ENCODE measurements at regions of chr1 and their contacts with region 1.

Region 1: DNA sequence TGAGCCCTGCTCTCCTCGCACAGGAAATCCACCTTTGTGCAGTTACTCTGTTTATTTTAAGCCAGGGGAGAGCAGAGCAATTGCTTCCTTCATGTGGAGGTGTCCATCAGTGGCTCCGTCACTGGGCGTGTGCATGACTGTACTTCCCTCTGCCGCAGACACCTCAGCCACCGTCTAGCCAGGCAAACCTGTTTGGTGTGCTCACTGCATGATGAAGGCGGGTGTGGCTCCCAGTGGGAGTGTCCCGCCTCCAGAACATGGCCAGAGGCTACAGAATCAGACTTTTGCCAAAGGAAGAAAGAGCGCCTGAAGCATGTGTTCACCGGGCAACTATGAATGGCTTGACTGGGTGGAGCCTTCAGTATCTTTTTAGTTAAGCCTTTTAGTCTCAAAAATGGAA is 26.1 kb upstream of the LAMC2 start:
- DNase-seq: peak; percentile 97 to 99
- H3K4me3 ChIP-seq: peak overlapping the region; percentile 30; the same call in 1 of the 2 replicates
- H3K27ac ChIP-seq: peak overlapping the region; percentile 91
- H3K4me1 ChIP-seq: peaks cover 64% of the 10 kb centered on the region
- H3K27me3 ChIP-seq: no peaks in the 10 kb centered on the region
- CTCF ChIP-seq: no peak

Region 2: GRCh38 chr1:183048087-183049085 is 111.6 kb before region 1 on chr1:
- CTCF ChIA-PET with region 1: no interaction called
- POLR2A ChIA-PET with region 1: no interaction called
- intact Hi-C with region 1: no loop called
- DNase-seq: no peak
- H3K4me3 ChIP-seq: no peak overlapping the region
- H3K27ac ChIP-seq: no peak overlapping the region
- H3K4me1 ChIP-seq: peaks cover 11% of the 10 kb centered on the region
- H3K27me3 ChIP-seq: no peaks in the 10 kb centered on the region
- CTCF ChIP-seq: no peak

Region 3: GRCh38 chr1:183180634-183181056 is 20.7 kb after region 1 on chr1:
- CTCF ChIA-PET with region 1: no interaction called
- POLR2A ChIA-PET with region 1: interaction called, 10 read pairs
- intact Hi-C with region 1: loop called (anchors 1 kb)
- DNase-seq: peak in 1 of 2 experiments; percentile 47
- H3K4me3 ChIP-seq: no peak overlapping the region
- H3K27ac ChIP-seq: peak overlapping the region; percentile 49
- H3K4me1 ChIP-seq: peaks cover 26% of the 10 kb centered on the region
- H3K27me3 ChIP-seq: no peaks in the 10 kb centered on the region
- CTCF ChIP-seq: no peak

Region 4: DNA sequence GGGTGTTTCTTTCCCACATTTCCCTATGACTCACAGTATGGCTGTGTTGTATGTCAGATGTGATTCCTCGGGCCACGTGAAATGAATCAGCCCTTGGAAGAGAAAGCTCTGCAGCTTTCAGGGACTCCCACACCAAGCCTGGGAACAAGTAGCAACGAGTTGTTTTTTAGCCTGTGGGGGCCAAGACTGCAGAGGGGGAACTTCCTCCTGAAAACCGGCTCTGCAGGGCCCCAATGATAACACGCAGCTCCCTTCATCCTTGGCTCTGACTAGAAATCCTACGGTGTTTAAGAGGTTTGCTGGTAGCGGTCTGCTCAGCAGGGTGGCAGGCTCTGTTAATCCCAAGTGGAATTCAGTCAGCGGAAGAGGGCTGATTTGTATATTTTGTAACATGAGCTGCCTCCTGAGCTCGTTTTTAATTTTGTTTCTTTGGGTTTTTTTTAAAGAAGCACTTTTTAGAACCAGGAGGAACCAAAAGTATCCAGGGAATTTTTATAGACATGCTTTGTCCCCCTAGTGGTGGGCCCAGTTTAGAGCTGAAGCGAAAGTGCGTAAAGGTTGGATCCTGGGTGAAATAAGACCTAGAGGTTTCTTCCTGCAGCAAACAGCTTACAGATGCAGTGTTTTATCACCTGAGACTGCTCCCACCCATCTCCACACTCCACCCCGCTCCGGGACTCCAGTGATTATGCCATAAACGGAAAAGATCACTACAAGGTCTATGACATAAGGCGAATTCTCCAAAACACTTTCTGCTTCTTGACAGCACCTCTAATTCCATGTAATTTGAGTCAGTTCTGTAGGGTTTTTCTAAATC is 74.9 kb after region 1 on chr1:
- CTCF ChIA-PET with region 1: no interaction called
- POLR2A ChIA-PET with region 1: no interaction called
- intact Hi-C with region 1: loop called (anchors 2 kb)
- DNase-seq: peak; percentile 81 to 96
- H3K4me3 ChIP-seq: peak overlapping the region; percentile 45; the same call in 1 of the 2 replicates
- H3K27ac ChIP-seq: peak overlapping the region; percentile 92
- H3K4me1 ChIP-seq: peaks cover 41% of the 10 kb centered on the region
- H3K27me3 ChIP-seq: no peaks in the 10 kb centered on the region
- CTCF ChIP-seq: peak; percentile 77

Region 5: DNA sequence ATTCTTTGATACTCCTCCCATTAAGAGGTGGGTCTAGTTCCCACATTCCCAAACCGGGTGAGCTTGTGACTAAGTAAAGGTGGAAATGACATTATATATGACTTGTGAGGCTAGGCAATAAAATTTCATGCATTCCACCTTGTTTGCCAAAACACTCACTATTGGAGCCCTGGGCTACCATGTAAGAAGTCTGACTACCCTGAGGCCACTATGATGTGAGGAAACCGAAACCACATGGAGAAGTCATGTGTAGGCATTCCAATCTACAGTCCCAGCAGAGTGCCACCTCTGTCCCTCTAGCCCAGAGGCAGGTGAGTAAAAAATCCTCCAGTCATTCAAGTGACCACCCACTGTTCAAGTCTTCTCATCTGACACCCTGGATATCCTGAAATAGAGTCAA is 294.4 kb after region 1 on chr1:
- CTCF ChIA-PET with region 1: no interaction called
- POLR2A ChIA-PET with region 1: no interaction called
- intact Hi-C with region 1: loop called (anchors 1 kb)
- DNase-seq: peak; percentile 70 to 99
- H3K4me3 ChIP-seq: no peak overlapping the region
- H3K27ac ChIP-seq: peak overlapping the region; percentile 98
- H3K4me1 ChIP-seq: peaks cover 27% of the 10 kb centered on the region
- H3K27me3 ChIP-seq: no peaks in the 10 kb centered on the region
- CTCF ChIP-seq: no peak

Region 6: GRCh38 chr1:183551904-183552303 is 391.9 kb after region 1 on chr1:
- CTCF ChIA-PET with region 1: no interaction called
- POLR2A ChIA-PET with region 1: no interaction called
- intact Hi-C with region 1: no loop called
- DNase-seq: no peak
- H3K4me3 ChIP-seq: no peak overlapping the region
- H3K27ac ChIP-seq: no peak overlapping the region
- H3K4me1 ChIP-seq: no peaks in the 10 kb centered on the region
- H3K27me3 ChIP-seq: no peaks in the 10 kb centered on the region
- CTCF ChIP-seq: no peak